MCF 10A (cell line): ENCODE measurements at regions of chr1 and their contacts with region 1.

Region 1: GRCh38 chr1:223087291-223088255 is 55.5 kb downstream of the TLR5 start:
- DNase-seq: no peak
- H3K4me3 Mint-ChIP-seq: no peak overlapping the region
- H3K27ac Mint-ChIP-seq: no peak overlapping the region
- H3K4me1 Mint-ChIP-seq: no peaks in the 10 kb centered on the region
- H3K27me3 Mint-ChIP-seq: peaks cover 52% of the 10 kb centered on the region
- CTCF ChIP-seq: no peak

Region 2: GRCh38 chr1:222754366-222755139 is 333.0 kb before region 1 on chr1:
- CTCF ChIA-PET with region 1: interaction called, 16 read pairs
- POLR2A ChIA-PET with region 1: no interaction called
- intact Hi-C with region 1: no loop called
- DNase-seq: peak; percentile 98
- H3K4me3 Mint-ChIP-seq: peak overlapping the region; percentile 46
- H3K27ac Mint-ChIP-seq: peak overlapping the region; percentile 86
- H3K4me1 Mint-ChIP-seq: peaks cover 28% of the 10 kb centered on the region
- H3K27me3 Mint-ChIP-seq: no peaks in the 10 kb centered on the region
- CTCF ChIP-seq: no peak

Region 3: DNA sequence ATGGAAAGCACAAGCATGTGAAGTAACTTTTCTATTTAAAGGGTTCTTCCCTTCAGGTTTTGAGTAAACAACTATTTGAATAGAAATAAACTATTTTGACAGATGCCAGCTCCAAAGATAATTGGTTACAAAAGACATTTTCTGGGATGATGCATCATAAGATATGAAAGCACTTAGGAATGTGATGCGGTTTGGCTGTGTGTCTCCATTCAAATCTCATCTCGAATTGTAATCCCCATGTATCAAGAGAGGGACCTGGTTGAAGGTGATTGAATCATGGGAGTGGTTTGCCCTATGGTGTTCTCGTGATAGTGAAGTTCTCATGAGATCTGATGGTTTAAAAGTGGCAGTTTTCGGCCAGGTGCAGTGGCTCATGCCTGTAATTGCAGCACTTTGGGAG is 266.3 kb before region 1 on chr1:
- CTCF ChIA-PET with region 1: interaction called, 20 read pairs
- POLR2A ChIA-PET with region 1: interaction called, 3 read pairs
- intact Hi-C with region 1: no loop called
- DNase-seq: no peak
- H3K4me3 Mint-ChIP-seq: no peak overlapping the region
- H3K27ac Mint-ChIP-seq: no peak overlapping the region
- H3K4me1 Mint-ChIP-seq: peaks cover 31% of the 10 kb centered on the region
- H3K27me3 Mint-ChIP-seq: no peaks in the 10 kb centered on the region
- CTCF ChIP-seq: no peak

Region 4: DNA sequence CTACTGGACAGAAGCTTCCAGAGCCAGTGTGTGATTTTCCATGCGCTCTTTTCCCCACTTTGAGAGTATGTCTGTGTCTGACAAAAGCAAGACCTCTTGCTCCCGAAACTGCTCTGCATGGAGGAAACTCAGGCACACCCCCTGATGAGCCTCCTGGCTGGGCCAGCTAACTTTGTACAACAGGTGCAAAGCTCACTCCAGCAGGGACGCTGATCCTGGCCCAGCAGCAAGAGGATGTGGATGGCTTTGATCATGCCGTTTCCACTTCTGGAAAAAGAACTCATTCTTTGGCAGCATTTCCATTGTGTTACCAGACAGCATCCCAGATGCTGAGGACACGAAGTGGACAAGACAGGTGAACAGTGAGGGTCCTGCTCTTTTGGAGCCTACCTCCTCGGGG is 47.6 kb before region 1 on chr1:
- CTCF ChIA-PET with region 1: no interaction called
- POLR2A ChIA-PET with region 1: no interaction called
- intact Hi-C with region 1: no loop called
- DNase-seq: no peak
- H3K4me3 Mint-ChIP-seq: no peak overlapping the region
- H3K27ac Mint-ChIP-seq: no peak overlapping the region
- H3K4me1 Mint-ChIP-seq: no peaks in the 10 kb centered on the region
- H3K27me3 Mint-ChIP-seq: peaks cover 21% of the 10 kb centered on the region
- CTCF ChIP-seq: no peak

Region 5: DNA sequence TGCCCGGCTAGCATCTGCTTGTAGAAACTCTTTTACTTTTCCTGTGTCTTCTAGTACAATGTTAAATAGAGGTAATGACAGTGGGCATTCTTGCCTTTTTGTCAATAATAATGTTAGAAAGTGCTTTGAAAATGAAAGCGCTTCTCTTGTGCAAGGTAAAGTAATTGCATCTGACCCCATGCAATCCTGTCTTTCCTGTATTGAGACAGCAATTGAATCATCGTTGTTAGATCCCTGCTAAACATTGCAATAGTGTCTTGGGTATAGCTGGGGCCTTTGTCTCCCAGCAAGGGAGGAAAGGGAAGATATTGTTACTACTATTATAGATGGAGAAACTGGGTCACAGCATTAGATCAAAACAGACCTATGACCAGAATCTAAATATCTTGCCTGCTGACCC is 25.4 kb before region 1 on chr1:
- CTCF ChIA-PET with region 1: interaction called, 14 read pairs
- POLR2A ChIA-PET with region 1: no interaction called
- intact Hi-C with region 1: no loop called
- DNase-seq: peak; percentile 51
- H3K4me3 Mint-ChIP-seq: no peak overlapping the region
- H3K27ac Mint-ChIP-seq: no peak overlapping the region
- H3K4me1 Mint-ChIP-seq: no peaks in the 10 kb centered on the region
- H3K27me3 Mint-ChIP-seq: peaks cover 14% of the 10 kb centered on the region
- CTCF ChIP-seq: no peak

Region 6: DNA sequence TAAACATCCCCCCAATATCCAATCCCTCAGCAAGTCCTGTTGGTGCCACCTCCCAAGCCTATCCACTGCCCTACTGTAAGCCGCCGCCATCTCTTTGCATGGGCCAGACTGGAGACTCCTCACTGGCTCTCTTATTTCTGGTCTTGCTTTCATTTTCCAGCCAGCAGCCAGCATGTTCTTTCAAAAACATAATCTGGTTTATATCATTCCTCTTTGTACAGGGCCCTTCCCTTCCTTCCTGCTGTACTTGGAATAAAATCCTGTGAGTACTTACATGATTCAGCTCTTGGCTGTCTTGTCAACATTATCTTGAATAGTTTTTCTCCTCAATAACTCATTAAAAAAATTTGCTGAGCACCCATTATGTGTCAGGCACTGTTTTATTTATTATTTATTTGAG is 27.3 kb after region 1 on chr1:
- CTCF ChIA-PET with region 1: interaction called, 35 read pairs
- POLR2A ChIA-PET with region 1: interaction called, 6 read pairs
- intact Hi-C with region 1: no loop called
- DNase-seq: no peak
- H3K4me3 Mint-ChIP-seq: no peak overlapping the region
- H3K27ac Mint-ChIP-seq: no peak overlapping the region
- H3K4me1 Mint-ChIP-seq: peaks cover 3% of the 10 kb centered on the region
- H3K27me3 Mint-ChIP-seq: no peaks in the 10 kb centered on the region
- CTCF ChIP-seq: no peak